Activated CD8-positive, alpha-beta T cell treated with anti-CD3 and anti-CD28 coated beads for 36 hours (primary cell): ENCODE measurements at regions of chr1 and their contacts with region 1.

Region 1: DNA sequence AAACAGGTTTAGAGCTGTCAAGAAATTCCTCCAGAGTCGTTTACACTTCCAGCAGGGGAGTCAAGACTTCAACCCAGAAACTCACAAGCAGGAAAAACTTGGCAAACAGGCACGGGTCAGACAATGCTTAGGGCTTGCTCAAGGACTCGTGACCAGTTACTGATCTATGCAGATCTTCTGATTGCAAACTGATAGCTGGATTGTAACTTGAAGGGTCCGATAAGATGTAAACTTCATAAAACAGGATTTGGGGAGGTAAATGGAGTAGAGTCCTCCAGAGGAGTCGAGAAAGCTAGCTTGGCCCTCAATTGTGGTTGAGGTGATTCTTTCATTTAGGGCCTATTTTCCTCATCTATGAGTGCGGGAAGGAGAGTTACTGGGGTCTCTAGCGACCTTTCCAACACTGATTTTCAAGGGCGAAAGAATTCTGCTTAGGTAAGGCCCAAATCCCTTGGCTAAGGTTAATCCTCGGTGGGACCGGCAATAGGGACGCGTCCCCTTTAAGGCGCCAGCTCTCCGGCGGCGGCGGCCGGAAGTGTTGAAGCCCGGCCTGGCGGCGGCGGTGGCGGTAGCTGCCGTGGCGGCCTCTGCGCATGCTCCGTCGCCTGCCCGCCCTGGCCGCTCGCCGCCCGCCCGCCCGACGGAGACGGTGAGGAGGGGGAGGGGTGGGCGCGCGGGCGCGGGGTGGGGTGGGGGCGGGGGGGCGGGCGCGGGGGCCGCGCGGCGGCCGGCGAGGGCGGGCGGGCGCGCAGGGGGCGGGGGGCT is at the start of gene GMEB1:
- DNase-seq: peak; percentile 88
- ATAC-seq: peak; percentile 77
- H3K4me3 Mint-ChIP-seq: peak within 1 kb of the TSS; percentile 93
- H3K27ac Mint-ChIP-seq: peak within 1 kb of the TSS; percentile 98
- H3K4me1 Mint-ChIP-seq: peaks cover 11% of the 10 kb centered on the region
- H3K27me3 Mint-ChIP-seq: no peaks in the 10 kb centered on the region
- CTCF ChIP-seq: no peak
- total RNA-seq, gene GMEB1: 22.0 to 23.3 TPM

Region 2: GRCh38 chr1:28510665-28511440 is 157.5 kb before region 1 on chr1:
- CTCF ChIA-PET with region 1: no interaction called
- POLR2A ChIA-PET with region 1: interaction called, 20 read pairs
- intact Hi-C with region 1: no loop called
- DNase-seq: peak; percentile 33
- ATAC-seq: peak; percentile 5
- H3K4me3 Mint-ChIP-seq: peak overlapping the region; percentile 94
- H3K27ac Mint-ChIP-seq: peak overlapping the region; percentile 95
- H3K4me1 Mint-ChIP-seq: peaks cover 33% of the 10 kb centered on the region
- H3K27me3 Mint-ChIP-seq: peaks cover 1% of the 10 kb centered on the region
- CTCF ChIP-seq: no peak

Region 3: GRCh38 chr1:28642847-28643635 is 25.3 kb before region 1 on chr1 and contains the start of gene TAF12:
- CTCF ChIA-PET with region 1: interaction called, 8 read pairs
- POLR2A ChIA-PET with region 1: interaction called, 98 read pairs
- intact Hi-C with region 1: no loop called
- DNase-seq: peak; percentile 91
- ATAC-seq: peak; percentile 84
- H3K4me3 Mint-ChIP-seq: peak within 1 kb of the TSS; percentile 98
- H3K27ac Mint-ChIP-seq: peak within 1 kb of the TSS; percentile 97
- H3K4me1 Mint-ChIP-seq: peaks cover 44% of the 10 kb centered on the region
- H3K27me3 Mint-ChIP-seq: no peaks in the 10 kb centered on the region
- CTCF ChIP-seq: peak; percentile 42
- total RNA-seq, gene TAF12: 21.3 to 23.0 TPM

Region 4: DNA sequence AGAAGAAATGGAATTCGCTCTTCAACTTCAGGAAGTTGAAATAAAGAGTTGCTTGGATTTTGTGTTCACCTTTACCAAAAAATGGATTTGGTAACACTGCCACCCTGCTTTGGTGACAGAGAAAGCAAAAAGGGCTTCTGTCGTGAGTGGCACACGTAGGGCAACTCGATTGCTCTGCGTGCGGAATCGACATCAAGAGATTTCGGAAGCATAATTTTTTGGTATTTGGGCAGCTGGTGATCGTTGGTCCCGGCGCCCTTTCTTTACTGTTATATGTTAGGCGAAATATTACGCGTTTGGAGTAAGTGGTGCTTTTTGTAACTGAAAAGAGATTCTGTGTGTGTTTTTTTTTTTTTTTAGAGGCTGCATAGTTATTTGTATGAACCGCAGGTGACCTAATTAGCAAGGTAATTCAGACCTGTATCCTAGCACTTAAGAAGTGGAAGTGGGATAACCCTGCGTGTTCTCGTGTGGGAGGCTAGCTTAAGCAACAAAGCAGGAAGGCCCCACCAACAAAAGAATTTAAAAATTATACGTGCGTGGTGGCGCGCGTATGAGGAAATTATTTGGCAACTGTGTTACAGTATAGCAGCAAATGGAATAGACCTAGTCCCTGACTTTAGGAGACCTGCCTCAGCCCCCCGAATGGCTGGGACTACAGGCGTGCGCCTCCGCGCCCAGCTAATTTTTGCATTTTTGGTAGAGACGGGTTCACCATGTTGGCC is 19.7 kb before region 1 on chr1 and contains the start of gene RNU11:
- CTCF ChIA-PET with region 1: interaction called, 8 read pairs
- POLR2A ChIA-PET with region 1: interaction called, 98 read pairs
- intact Hi-C with region 1: no loop called
- DNase-seq: peak; percentile 93
- ATAC-seq: peak; percentile 80
- H3K4me3 Mint-ChIP-seq: peak within 1 kb of the TSS; percentile 91
- H3K27ac Mint-ChIP-seq: peak within 1 kb of the TSS; percentile 100
- H3K4me1 Mint-ChIP-seq: peaks cover 30% of the 10 kb centered on the region
- H3K27me3 Mint-ChIP-seq: no peaks in the 10 kb centered on the region
- CTCF ChIP-seq: no peak
- total RNA-seq, gene RNU11: not detected

Region 5: DNA sequence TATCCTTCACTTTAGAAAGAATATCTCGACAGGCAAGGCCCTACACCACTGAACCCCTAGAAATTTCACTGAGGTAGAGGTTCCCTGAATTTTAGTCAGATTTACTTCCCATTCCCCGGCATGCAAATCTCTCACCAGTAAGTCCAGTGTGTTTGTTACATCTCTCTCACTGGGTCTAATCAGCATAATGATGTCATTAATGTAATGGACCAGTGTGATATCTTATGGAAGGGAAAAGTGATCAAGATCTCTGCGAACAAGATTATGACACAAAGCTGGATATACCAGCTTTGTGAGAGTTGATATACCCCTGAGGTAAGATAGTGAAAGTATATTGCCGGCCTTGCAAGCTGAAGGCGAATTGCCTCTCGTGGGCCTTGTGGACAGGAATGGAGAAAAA is 12.0 kb before region 1 on chr1:
- CTCF ChIA-PET with region 1: no interaction called
- POLR2A ChIA-PET with region 1: interaction called, 98 read pairs
- intact Hi-C with region 1: no loop called
- DNase-seq: no peak
- ATAC-seq: no peak
- H3K4me3 Mint-ChIP-seq: no peak overlapping the region
- H3K27ac Mint-ChIP-seq: no peak overlapping the region
- H3K4me1 Mint-ChIP-seq: no peaks in the 10 kb centered on the region
- H3K27me3 Mint-ChIP-seq: no peaks in the 10 kb centered on the region
- CTCF ChIP-seq: no peak

Region 6: DNA sequence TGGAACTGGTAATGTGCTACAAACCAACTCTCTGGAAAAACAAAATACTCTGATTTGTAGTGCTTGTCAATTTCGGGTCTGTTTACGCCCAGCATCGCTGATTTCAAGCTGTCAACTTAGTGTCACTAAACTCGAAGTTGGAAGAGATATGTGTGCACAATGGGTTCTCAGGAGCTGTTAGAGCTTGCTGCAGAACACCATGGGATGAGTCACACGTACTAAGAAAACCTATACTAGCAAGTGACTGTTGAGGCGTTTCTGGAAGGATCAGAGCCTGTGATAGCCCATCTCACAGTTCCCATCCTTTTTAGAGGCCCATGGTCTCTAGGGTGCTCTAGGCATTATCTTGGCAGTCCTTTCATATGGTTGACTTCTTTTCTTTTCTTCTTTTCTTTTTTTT is 14.5 kb after region 1 on chr1:
- CTCF ChIA-PET with region 1: no interaction called
- POLR2A ChIA-PET with region 1: interaction called, 10 read pairs
- intact Hi-C with region 1: no loop called
- DNase-seq: no peak
- ATAC-seq: no peak
- H3K4me3 Mint-ChIP-seq: no peak overlapping the region
- H3K27ac Mint-ChIP-seq: no peak overlapping the region
- H3K4me1 Mint-ChIP-seq: no peaks in the 10 kb centered on the region
- H3K27me3 Mint-ChIP-seq: no peaks in the 10 kb centered on the region
- CTCF ChIP-seq: no peak